CD4-positive, alpha-beta memory T cell (primary cell): ENCODE measurements at regions of chr9 and their contacts with region 1.

Region 1: DNA sequence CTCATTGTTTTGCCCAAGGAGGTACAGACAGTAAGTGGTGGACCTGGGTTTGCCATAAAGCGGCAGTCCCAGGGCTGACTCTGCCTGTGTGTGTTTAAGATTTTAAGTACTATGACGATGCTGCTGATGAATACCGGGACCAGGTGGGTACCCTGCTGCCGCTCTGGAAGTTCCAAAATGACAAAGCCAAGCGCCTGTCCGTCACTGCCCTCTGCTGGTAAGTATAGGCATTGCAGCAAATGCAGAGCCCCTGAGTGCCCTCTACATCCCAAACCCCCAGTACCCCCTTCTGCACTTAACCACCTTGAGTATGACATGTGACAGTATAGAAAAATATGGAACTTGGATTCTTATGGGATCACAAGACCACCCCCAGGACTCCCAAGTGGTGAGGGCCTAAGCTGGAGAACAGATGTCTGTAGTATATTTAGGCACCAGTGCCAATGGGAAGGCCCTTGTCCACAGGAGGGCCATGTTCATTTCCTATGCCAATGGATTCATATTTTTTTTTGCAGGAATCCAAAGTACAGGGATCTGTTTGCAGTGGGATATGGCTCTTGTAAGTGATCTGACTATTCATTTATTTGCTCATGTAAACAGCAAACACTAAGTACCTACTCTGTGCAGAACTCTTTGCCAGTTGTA is 22.0 kb downstream of the ENHO start:
- DNase-seq: peak; percentile 54 to 69 (median 62)
- H3K4me3 ChIP-seq: no peak overlapping the region
- H3K4me3 Mint-ChIP-seq: no peak overlapping the region
- H3K27ac ChIP-seq: no peak overlapping the region
- H3K27ac Mint-ChIP-seq: no peak overlapping the region
- H3K4me1 ChIP-seq: no peaks in the 10 kb centered on the region
- H3K4me1 Mint-ChIP-seq: peaks cover 0 to 3% (median 1%) of the 10 kb centered on the region in 4 donors
- H3K27me3 ChIP-seq: no peaks in the 10 kb centered on the region
- H3K27me3 Mint-ChIP-seq: peaks cover 3 to 10% of the 10 kb centered on the region in 2 donors

Region 2: DNA sequence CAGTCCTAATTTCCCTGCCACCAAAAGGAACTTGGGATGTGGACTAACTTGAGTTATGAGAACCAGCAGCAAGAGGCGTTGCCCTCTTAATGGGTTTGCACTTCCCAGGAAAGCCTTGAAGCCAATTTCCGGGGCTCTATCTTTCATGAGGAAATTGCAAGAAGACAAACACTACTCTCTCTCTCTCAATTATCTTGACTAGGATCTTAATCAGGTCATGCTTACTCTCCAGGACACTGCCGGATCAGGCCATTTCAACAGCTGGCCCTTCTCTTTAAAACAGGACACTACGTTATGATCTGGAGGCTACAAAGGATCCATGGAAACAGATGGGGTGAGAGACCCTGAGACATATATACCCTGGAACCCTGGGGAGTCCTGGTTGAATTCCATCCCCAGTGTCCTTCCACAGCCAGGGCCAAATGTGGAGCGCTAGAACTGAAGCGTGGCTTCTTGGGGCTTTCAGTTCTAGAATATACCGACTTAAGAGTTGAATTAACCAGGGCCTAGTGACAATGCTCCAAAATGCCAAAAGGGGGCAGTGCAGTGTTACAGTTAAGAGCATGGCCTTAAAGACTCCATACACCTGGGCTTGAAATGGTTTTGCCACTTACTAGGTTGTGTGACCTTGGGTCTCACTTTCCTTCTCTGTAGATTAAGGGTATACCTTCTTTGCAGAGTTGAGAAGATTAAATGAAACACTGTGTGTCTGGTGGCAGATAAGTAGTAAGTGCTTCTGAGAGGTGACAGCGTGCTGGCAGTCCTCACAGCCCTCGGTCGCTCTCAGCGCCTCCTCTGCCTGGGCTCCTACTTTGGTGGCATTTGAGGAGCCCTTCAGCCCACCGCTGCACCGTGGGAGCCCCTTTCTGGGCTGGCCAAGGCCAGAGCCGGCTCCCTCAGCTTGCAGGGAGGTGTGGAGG is 63.5 kb before region 1 on chr9:
- CTCF ChIA-PET with region 1: interaction called, 105 read pairs
- POLR2A ChIA-PET with region 1: no interaction called
- intact Hi-C with region 1: loop called (anchors 1 kb)
- DNase-seq: peak; percentile 65 to 69 (median 67)
- H3K4me3 ChIP-seq: no peak overlapping the region
- H3K4me3 Mint-ChIP-seq: no peak overlapping the region
- H3K27ac ChIP-seq: no peak overlapping the region
- H3K27ac Mint-ChIP-seq: no peak overlapping the region
- H3K4me1 ChIP-seq: peaks cover 11% of the 10 kb centered on the region
- H3K4me1 Mint-ChIP-seq: peaks cover 12 to 18% (median 13%) of the 10 kb centered on the region in 4 donors
- H3K27me3 ChIP-seq: no peaks in the 10 kb centered on the region
- H3K27me3 Mint-ChIP-seq: no peaks in the 10 kb centered on the region

Region 3: DNA sequence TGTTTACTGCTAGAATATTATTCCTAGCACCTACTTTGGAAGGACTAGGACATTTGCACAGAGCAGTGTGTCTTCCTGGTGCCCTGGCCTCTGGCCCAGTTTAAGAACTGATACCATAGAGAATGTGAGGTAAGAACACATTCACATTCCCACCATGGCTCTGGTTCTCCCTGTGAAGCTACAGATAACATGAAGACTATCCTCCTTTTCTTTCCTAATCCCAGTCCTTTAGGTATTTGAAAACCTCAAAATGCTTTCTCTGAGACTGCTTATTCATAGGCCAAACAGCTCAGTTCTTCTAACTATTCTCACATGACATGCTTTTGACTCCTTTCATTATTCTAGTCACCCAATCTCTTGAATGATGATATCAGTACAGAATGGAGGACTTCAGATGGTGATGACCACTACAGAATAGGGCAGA is 54.3 kb before region 1 on chr9:
- CTCF ChIA-PET with region 1: interaction called, 31 read pairs
- POLR2A ChIA-PET with region 1: no interaction called
- intact Hi-C with region 1: no loop called
- DNase-seq: no peak
- H3K4me3 ChIP-seq: no peak overlapping the region
- H3K4me3 Mint-ChIP-seq: no peak overlapping the region
- H3K27ac ChIP-seq: no peak overlapping the region
- H3K27ac Mint-ChIP-seq: no peak overlapping the region
- H3K4me1 ChIP-seq: peaks cover 4% of the 10 kb centered on the region
- H3K4me1 Mint-ChIP-seq: peaks cover under 1 to 6% (median 4%) of the 10 kb centered on the region in 4 donors
- H3K27me3 ChIP-seq: no peaks in the 10 kb centered on the region
- H3K27me3 Mint-ChIP-seq: no peaks in the 10 kb centered on the region